Activated CD8-positive, alpha-beta memory T cell treated with anti-CD3 and anti-CD28 coated beads, Interleukin-2, amount 10 ng/mL, durations not matched to agents 7 days and 5 days (primary cell): ENCODE measurements at regions of chr5 and their contacts with region 1.

Region 1: GRCh38 chr5:32489791-32490582 is 45.4 kb upstream of the ZFR start:
- DNase-seq: peak; percentile 79
- ATAC-seq: peak; percentile 64
- H3K4me3 Mint-ChIP-seq: no peak overlapping the region
- H3K27ac Mint-ChIP-seq: no peak overlapping the region
- H3K4me1 Mint-ChIP-seq: peaks cover 2% of the 10 kb centered on the region
- H3K27me3 Mint-ChIP-seq: no peaks in the 10 kb centered on the region

Region 2: GRCh38 chr5:32298059-32298415 is 191.9 kb before region 1 on chr5:
- CTCF ChIA-PET with region 1: no interaction called
- DNase-seq: no peak
- ATAC-seq: peak; percentile 71
- H3K4me3 Mint-ChIP-seq: no peak overlapping the region
- H3K27ac Mint-ChIP-seq: no peak overlapping the region
- H3K4me1 Mint-ChIP-seq: peaks cover 29% of the 10 kb centered on the region
- H3K27me3 Mint-ChIP-seq: no peaks in the 10 kb centered on the region

Region 3: DNA sequence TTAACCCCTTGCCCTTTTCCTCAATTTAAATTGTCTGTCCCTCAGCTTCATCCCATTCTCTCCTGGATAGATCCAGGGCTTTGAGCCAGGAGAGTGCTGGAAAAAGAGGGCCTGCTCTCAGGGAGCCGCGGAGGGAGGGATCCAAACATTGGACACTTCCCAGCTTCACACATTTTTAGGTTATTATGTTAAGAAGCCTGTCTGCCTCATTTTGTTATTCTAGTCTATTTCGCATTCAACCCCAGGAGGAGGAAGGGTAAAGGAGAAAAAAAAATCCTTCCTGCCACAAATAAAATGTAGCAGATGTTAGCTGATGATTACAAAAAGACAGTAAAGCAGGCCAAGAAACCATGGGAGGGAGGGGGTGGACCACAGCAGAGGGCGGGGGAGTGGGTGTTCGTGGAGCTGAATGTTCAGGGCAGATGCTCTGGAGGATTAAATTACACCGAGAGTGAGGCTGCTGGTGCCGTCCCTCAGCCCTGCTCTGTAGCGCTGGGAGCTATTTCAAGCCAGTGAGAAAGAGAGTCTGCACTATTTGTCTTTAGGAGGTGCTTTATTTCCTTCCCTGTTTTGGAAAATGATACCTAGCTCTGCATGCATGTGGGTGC is 15.1 kb after region 1 on chr5:
- CTCF ChIA-PET with region 1: interaction called, 33 read pairs
- DNase-seq: no peak
- ATAC-seq: no peak
- H3K4me3 Mint-ChIP-seq: no peak overlapping the region
- H3K27ac Mint-ChIP-seq: no peak overlapping the region
- H3K4me1 Mint-ChIP-seq: peaks cover 4% of the 10 kb centered on the region
- H3K27me3 Mint-ChIP-seq: peaks cover 20% of the 10 kb centered on the region

Region 4: DNA sequence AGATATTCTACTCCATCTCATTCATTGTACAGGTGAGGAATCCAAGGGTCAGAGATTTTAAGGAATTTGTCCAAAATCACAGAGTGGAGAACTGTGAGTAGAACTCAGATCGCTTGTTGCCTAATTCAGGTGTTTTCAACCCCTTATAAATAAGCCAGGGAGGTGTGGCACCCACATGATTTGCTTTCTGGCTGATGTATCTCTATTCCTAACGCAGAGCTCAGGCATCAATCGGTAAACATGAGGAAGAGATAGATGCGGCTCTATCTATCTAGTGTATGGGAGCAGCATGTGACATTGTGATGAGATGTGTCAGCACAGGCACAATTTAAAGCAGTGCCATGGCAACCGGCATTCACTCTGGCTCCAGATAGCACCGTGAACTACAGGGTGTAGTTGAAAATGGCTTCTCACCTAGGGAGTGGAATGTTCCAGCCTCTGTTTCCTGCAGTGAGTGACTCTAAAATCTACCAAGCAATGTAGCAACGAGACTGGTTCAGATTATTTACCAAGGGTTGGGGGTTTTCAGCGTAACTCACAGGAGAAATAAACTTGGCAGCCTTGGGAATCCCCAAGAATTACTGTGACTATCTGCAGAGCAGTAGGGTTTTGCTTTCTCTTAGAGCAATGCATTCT is 42.0 kb after region 1 on chr5:
- CTCF ChIA-PET with region 1: interaction called, 11 read pairs
- DNase-seq: peak; percentile 81
- ATAC-seq: peak; percentile 89
- H3K4me3 Mint-ChIP-seq: peak overlapping the region; percentile 82
- H3K27ac Mint-ChIP-seq: peak overlapping the region; percentile 86
- H3K4me1 Mint-ChIP-seq: peaks cover 61% of the 10 kb centered on the region
- H3K27me3 Mint-ChIP-seq: no peaks in the 10 kb centered on the region

Region 5: DNA sequence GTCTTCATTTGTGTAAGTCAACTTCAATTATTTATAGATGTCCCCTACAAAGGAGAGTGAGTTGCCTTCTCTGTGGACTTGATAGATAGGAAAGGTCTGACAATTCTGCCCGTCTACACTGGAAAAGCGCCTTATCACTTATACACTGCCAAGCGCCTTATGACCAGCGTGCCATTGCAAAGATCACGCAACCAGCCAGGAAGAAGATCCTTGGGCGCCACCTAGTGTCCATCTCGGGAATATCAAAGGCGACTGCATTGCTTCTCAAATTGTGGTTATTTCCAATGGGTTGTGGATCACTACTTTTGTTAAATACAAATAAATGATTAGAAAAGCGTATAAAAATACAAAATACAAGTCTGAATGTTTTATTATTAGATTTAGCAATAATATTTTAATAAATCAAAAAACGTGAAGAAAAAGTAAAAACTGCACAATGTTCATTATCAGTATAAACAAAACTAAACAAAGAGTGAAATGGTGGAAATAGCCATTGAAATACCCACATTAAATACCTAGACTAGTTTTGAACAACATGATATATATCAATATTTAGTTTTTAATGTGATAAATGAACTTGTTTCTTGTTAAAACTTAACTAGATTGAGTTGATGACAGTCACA is 123.2 kb after region 1 on chr5:
- CTCF ChIA-PET with region 1: interaction called, 51 read pairs
- DNase-seq: peak; percentile 88
- ATAC-seq: peak; percentile 83
- H3K4me3 Mint-ChIP-seq: no peak overlapping the region
- H3K27ac Mint-ChIP-seq: no peak overlapping the region
- H3K4me1 Mint-ChIP-seq: peaks cover 12% of the 10 kb centered on the region
- H3K27me3 Mint-ChIP-seq: no peaks in the 10 kb centered on the region

Region 6: DNA sequence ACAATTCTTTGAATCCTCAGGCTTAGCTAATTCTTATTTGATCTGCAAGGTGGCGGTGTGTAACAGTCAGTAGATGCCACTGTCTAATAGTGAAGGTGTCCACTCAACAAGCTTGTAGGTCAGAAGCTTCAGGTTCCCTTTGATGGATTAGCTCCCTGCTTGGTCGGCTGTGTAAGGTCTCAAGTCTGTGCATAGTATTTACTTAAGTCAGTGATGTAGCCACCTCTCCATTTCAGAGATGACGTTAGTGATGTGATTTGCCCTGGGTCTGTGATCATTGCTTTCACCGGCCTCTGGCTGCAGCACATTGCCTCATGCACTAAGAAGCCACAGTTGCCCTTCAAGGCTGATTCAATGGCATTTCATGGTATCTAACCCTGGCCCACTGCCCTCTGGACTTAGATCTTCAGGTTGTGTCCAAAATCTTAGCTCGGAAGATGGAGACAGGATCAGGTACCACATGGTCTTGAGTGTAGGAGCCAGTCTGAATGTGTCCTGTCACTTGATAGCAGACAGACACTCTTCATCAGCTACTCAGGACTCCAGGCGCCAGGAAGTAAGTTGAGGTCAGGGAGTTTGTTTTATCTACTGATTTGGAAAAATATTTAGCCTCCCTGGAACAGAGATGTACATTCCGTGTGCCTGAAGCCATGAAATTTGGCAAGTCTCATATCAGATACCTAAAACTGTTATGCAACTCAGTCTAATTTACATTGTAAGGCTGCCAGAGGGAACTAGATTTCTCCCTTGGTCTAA is 138.2 kb after region 1 on chr5:
- CTCF ChIA-PET with region 1: no interaction called
- DNase-seq: no peak
- ATAC-seq: no peak
- H3K4me3 Mint-ChIP-seq: no peak overlapping the region
- H3K27ac Mint-ChIP-seq: no peak overlapping the region
- H3K4me1 Mint-ChIP-seq: no peaks in the 10 kb centered on the region
- H3K27me3 Mint-ChIP-seq: no peaks in the 10 kb centered on the region